Dendritic cell treated with granulocyte-macrophage colony-stimulating factor and Interleukin-4, amounts not matched to agents 40 ng/mL and 50 ng/mL, for 4 days (primary cell): ENCODE measurements at regions of chr12 and their contacts with region 1.

Region 1: GRCh38 chr12:121590476-121591143 is 9.8 kb upstream of the KDM2B start:
- H3K4me3 Mint-ChIP-seq: peak overlapping the region; percentile 80
- H3K27ac Mint-ChIP-seq: peak overlapping the region; percentile 88
- H3K4me1 Mint-ChIP-seq: peaks cover 26% of the 10 kb centered on the region
- H3K27me3 Mint-ChIP-seq: peaks cover 8% of the 10 kb centered on the region

Region 2: DNA sequence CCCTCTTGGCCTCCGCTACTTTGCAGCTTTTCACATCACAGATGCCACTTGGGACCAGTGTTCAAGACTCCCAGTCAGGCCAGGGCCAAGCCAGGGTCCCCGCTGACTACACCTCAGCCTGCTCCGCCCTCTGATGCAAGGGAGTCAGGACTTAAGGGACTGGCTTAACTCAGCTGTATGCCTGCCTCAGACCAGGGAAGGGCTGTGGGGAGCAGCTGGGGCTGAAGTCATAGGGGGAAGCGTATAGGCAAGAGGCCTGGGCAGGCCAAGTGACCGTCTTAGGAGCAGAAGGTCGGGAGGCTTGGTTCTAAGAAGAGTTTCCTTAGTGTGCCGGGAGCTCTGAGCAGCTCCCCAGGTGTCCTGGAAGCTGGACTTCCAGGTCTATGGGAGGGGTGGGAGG is 31.7 kb before region 1 on chr12:
- intact Hi-C with region 1: loop called (anchors 5 kb)
- H3K4me3 Mint-ChIP-seq: no peak overlapping the region
- H3K27ac Mint-ChIP-seq: peak overlapping the region; percentile 87
- H3K4me1 Mint-ChIP-seq: peaks cover 42% of the 10 kb centered on the region
- H3K27me3 Mint-ChIP-seq: no peaks in the 10 kb centered on the region

Region 3: GRCh38 chr12:121579981-121580868 is 10.4 kb before region 1 on chr12:
- intact Hi-C with region 1: loop called (anchors 1 kb)
- H3K4me3 Mint-ChIP-seq: peak overlapping the region; percentile 86
- H3K27ac Mint-ChIP-seq: peak overlapping the region; percentile 98
- H3K4me1 Mint-ChIP-seq: peaks cover 56% of the 10 kb centered on the region
- H3K27me3 Mint-ChIP-seq: no peaks in the 10 kb centered on the region

Region 4: GRCh38 chr12:121649819-121650353 is 59.3 kb after region 1 on chr12:
- intact Hi-C with region 1: no loop called
- H3K4me3 Mint-ChIP-seq: no peak overlapping the region
- H3K27ac Mint-ChIP-seq: no peak overlapping the region
- H3K4me1 Mint-ChIP-seq: peaks cover 42% of the 10 kb centered on the region
- H3K27me3 Mint-ChIP-seq: no peaks in the 10 kb centered on the region

Region 5: DNA sequence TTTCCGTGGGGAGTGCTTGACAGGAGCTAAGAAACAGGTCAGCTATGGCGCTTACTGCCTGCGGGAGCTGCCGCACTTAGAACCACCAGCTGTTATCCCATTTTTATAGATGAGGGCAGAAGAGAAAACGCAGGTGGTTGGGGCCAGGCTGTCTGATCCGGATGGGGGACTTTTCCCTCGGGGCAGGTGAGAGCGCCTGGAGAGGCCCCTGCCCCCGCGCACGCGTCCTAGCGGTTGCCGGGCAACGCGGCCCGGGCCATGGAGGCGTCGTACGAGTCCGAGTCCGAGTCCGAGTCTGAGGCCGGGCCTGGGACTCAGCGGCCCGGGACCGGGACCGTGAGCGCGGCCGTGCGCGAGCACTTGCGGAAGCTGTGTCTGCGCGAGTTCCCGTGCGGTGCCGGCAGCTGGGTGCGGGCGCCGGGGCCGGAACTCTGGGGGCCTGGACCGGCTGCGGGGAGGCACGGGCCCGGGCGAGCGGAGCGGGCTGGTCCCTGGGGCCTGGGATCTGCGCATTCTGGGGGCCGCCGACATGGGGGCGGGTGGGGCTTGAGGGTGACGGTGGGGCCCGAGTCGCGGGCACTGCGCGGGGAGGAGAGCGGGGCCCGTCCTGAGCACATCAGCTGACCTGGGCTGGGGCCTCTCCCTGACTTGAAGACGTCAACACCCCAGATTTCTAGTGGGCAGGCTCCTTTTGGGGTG is 592.4 kb after region 1 on chr12 and contains the start of gene LRRC43:
- intact Hi-C with region 1: no loop called
- H3K4me3 Mint-ChIP-seq: peak within 1 kb of the TSS; percentile 72
- H3K27ac Mint-ChIP-seq: no peak within 1 kb of the TSS
- H3K4me1 Mint-ChIP-seq: peaks cover 19% of the 10 kb centered on the region
- H3K27me3 Mint-ChIP-seq: peaks cover 36% of the 10 kb centered on the region